Heart left ventricle (tissue), 16 donors: ENCODE measurements at regions of chr15 and their contacts with region 1.

Region 1: GRCh38 chr15:95919460-95919859 is 411.0 kb upstream of the NR2F2 start:
- DNase-seq: no peak
- ATAC-seq: no peak
- H3K4me3 ChIP-seq: no peak overlapping the region
- H3K27ac ChIP-seq: no peak overlapping the region
- H3K4me1 ChIP-seq: no peaks in the 10 kb centered on the region
- H3K27me3 ChIP-seq: no peaks in the 10 kb centered on the region
- CTCF ChIP-seq: no peak
- POLR2A ChIP-seq: no peak

Region 2: GRCh38 chr15:95839367-95839782 is 80.1 kb before region 1 on chr15:
- intact Hi-C with region 1: no loop called
- DNase-seq: no peak
- ATAC-seq: no peak
- H3K4me3 ChIP-seq: no peak overlapping the region
- H3K27ac ChIP-seq: peak overlapping the region in 8 of 12 donors; percentile 31 to 74 (median 60)
- H3K4me1 ChIP-seq: peaks cover 0 to 21% (median 2%) of the 10 kb centered on the region in 12 donors
- H3K27me3 ChIP-seq: no peaks in the 10 kb centered on the region
- CTCF ChIP-seq: no peak
- POLR2A ChIP-seq: no peak

Region 3: GRCh38 chr15:97654481-97655076 is 1735.1 kb after region 1 on chr15:
- intact Hi-C with region 1: loop called in 1 of 10 experiments (anchors 5 kb)
- DNase-seq: no peak
- ATAC-seq: no peak
- H3K4me3 ChIP-seq: no peak overlapping the region
- H3K27ac ChIP-seq: no peak overlapping the region
- H3K4me1 ChIP-seq: peaks cover 0 to 9% (median 0%) of the 10 kb centered on the region in 12 donors
- H3K27me3 ChIP-seq: peaks cover 0 to 19% (median 3%) of the 10 kb centered on the region in 9 donors
- CTCF ChIP-seq: no peak
- POLR2A ChIP-seq: no peak